ENCODE measurements at regions of chr2 and their contacts with region 1.

Region 1: DNA sequence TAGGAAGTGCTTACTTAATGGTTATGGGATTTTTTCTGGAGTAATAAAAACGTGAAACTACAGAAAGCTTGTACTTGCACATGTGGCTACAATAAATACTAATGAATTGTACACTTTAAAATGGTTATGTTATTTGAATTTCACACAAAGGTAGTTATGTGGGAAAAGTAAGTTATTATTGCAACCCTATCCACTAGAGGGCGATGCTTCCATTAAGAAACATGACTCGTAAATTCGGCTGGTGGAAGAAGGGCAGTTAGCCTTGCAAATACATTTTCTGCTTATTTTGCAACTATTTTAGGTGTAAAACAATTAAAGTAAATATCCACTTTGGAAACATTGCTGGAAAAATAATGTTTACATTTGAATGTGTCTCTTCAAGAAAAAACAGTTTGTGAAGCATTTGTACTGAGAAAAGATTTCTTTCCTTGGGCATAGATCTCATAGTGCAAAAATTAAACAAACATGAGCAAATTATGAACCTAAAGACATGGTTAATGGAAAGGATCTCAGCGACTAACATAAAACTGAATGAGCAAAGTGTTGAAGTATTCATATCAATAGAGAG is 68.1 kb upstream of the CSRNP3 start:
- DNase-seq: peak; percentile 13
- ATAC-seq: no peak
- H3K4me3 Mint-ChIP-seq: no peak overlapping the region
- H3K27ac Mint-ChIP-seq: no peak overlapping the region
- H3K4me1 Mint-ChIP-seq: peaks cover 5% of the 10 kb centered on the region
- H3K27me3 Mint-ChIP-seq: peaks cover 9% of the 10 kb centered on the region
- CTCF ChIP-seq: peak; percentile 66

Region 2: DNA sequence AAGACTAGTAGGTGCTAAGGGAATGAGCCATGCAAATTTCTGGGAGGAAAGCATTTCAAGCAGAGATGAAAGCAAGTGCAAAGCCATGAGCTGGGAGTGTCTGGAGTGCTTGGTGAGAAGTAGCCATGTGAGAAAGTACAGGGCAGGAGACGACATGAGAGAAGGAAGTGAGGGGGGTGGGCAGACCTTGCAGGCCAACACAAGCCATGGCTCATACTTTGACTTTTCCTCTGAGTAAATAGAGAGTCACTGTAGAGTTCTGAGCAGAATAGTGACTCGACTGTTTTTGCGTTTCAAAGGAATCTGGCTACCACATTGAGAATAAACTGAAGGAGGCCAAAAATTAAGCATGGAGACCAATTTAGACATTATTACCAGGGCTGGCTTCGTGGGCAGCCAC is 120.0 kb before region 1 on chr2:
- CTCF ChIA-PET with region 1: no interaction called
- POLR2A ChIA-PET with region 1: no interaction called
- intact Hi-C with region 1: no loop called
- DNase-seq: no peak
- ATAC-seq: no peak
- H3K4me3 Mint-ChIP-seq: no peak overlapping the region
- H3K27ac Mint-ChIP-seq: no peak overlapping the region
- H3K4me1 Mint-ChIP-seq: peaks cover 14% of the 10 kb centered on the region
- H3K27me3 Mint-ChIP-seq: no peaks in the 10 kb centered on the region
- CTCF ChIP-seq: no peak

Region 3: DNA sequence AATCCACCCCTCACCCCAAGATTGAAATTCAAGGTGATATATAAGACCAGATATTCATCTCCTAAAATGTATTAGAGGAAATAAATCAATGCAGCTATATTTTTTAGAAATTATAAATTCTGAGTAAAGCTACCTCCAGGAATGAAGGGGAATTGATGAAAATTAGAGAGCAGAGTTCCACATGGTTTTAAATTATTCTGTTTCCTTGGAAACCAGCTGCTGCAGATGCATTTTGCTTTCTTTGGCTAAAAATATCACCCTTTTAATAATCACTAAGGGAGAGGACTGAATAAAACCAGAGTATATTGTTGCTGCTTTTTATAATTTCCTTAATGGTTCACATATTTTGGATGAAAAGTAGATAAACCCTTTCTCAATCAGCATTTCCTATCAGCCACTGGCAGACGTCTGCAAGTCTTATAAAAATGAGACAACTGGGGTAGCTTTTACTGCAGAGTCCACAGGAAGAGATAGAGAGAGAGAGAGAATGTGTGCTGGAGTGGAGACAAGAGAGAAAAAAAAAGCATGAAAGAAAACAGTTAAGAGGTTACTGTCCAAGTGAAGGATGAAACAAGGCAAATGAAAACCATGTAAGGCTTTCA is 70.1 kb after region 1 on chr2:
- CTCF ChIA-PET with region 1: no interaction called
- POLR2A ChIA-PET with region 1: no interaction called
- intact Hi-C with region 1: no loop called
- DNase-seq: no peak
- ATAC-seq: no peak
- H3K4me3 Mint-ChIP-seq: no peak overlapping the region
- H3K27ac Mint-ChIP-seq: no peak overlapping the region
- H3K4me1 Mint-ChIP-seq: no peaks in the 10 kb centered on the region
- H3K27me3 Mint-ChIP-seq: peaks cover 5% of the 10 kb centered on the region
- CTCF ChIP-seq: no peak

Region 4: DNA sequence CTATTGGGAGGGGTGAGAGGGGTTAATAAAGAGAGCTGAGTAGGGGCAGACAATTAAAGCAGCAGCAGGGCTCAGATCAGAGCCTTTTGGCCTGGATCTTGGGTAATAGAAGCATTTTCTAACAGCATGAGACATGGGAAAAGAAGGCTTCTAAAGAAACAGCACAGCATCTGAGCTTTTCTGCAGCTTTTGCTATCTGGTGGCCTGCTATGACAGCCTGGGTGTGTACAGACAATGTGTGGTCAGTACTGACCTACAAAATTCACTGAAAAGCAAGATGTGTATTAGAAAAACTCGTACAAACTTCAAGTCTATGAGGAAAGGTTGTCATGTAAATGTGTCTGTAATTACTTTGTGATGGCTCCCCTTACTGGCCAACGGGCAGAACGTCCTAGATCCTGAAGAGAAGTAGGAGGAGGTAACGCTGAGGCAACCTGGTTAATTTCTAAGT is 297.1 kb after region 1 on chr2:
- CTCF ChIA-PET with region 1: interaction called, 5 read pairs
- POLR2A ChIA-PET with region 1: no interaction called
- intact Hi-C with region 1: loop called (anchors 10 kb)
- DNase-seq: peak; percentile 32
- ATAC-seq: peak; percentile 47
- H3K4me3 Mint-ChIP-seq: no peak overlapping the region
- H3K27ac Mint-ChIP-seq: no peak overlapping the region
- H3K4me1 Mint-ChIP-seq: no peaks in the 10 kb centered on the region
- H3K27me3 Mint-ChIP-seq: peaks cover 4% of the 10 kb centered on the region
- CTCF ChIP-seq: peak; percentile 33

Measured in activated CD8-positive, alpha-beta T cell treated with anti-CD3 and anti-CD28 coated beads for 36 hours (primary cell).